GM18951 (cell line): ENCODE measurements at regions of chr6 and their contacts with region 1.

Region 1: DNA sequence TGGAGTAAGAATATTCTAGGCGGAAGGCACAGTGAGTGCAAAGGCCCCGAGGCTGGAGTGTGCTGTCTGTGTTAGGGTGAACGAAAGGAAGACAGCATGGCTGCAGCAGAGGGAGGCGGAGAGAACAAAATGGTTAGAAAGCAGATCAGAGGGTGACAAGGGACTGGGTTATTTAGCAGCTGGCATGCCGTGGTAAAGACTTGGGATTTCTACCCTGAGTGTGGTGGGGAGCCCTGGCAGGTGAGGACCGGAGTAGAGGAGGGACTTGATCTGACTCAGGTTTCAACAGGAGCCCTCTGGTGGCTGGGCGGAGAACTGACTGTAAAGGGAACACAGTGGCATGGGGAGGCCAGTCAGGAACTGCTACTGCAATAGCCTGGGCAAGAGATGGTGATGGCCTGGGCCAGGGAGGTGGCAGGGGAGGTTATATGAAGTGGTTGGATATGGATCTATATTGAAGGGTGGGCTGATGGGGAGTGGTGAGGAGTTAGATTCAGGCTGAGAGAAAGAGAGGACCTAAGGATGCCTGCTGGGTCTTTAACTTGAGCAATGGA is 38.0 kb downstream of the PIM1 start:
- POLR2A ChIP-seq: no peak

Region 2: GRCh38 chr6:36769676-36770499 is 438.1 kb before region 1 on chr6:
- in situ Hi-C with region 1: loop called (anchors 10 kb)
- POLR2A ChIP-seq: no peak

Region 3: GRCh38 chr6:37029249-37029971 is 178.6 kb before region 1 on chr6:
- in situ Hi-C with region 1: loop called (anchors 10 kb)
- POLR2A ChIP-seq: no peak